GM12878 (cell line): ENCODE measurements at regions of chr18 and their contacts with region 1.

Region 1: DNA sequence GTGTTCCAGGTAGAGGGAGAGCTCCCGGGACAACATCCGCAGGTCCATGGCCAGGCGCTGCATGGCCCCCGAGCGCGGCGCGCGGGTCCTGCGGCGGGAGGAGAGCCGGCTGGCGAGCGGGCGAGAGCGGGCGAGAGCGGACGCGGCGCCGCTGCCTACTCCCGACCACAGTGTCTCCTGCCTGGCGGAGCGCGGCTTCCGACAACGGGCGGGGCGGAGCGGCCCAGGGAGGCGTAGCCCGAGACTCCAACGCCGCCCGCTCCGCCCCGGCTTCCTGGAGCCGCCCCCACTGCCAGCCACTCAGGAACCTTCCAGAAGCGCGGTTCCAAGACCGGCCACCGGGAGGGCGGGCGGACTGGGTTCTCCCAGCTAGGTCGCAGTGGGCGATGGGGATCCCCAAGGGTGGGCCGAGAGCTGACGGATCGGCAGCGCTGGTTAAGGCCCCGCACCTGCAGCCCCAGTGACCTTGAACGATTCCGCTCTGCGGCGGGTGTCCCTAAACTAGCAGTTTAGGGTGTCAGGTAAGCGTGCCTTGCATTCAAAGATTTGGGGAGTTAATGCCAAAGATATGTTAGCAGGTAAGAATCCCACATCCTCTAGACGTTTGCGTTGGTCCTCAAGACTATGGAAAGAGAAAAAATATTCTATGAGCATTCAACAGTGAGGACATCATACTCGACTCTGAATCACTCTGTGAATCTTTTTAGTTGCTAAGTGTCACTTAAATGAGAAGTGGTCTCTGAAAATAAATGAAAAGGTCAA is at the start of gene ABHD3:
- DNase-seq: peak; percentile 55
- ATAC-seq: peak; percentile 97
- H3K4me3 ChIP-seq: peak within 1 kb of the TSS; percentile 76
- H3K27ac ChIP-seq: peak within 1 kb of the TSS; percentile 83
- H3K4me1 ChIP-seq: no peaks in the 10 kb centered on the region
- H3K27me3 ChIP-seq: no peaks in the 10 kb centered on the region
- CTCF ChIP-seq: peak; percentile 27 to 42 (median 35); a peak in 5 of 6 replicates
- EP300 ChIP-seq: no peak
- POLR2A ChIP-seq: peak; percentile 96
- RAD21 ChIP-seq: peak; percentile 23; the same call in 1 of the 2 replicates
- polyA plus RNA-seq, gene ABHD3: 4.9 to 11.9 TPM

Region 2: DNA sequence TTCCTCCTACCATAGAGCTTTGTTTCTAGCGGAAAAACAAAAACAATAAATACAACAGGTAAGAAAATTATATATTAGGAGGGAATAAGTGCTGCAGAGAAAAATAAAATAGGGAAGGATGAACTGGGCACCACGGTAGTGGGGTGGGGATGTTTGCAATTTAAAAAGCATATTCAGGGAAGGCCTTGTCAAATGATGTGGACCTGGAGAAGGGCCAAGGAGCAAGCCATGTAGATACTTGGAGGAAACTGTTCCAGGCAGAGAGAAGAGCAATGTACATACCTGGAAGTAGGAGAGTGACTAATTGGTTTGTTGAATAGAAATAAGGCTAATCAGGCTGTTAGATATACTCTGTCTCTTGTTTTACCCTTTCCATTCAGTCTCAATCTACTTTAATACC is 729.7 kb before region 1 on chr18:
- CTCF ChIA-PET with region 1: no interaction called
- POLR2A ChIA-PET with region 1: no interaction called
- RAD21 ChIA-PET with region 1: no interaction called
- SMC1A ChIA-PET with region 1: no interaction called
- in situ Hi-C with region 1: no loop called
- intact Hi-C with region 1: no loop called
- DNase-seq: no peak
- ATAC-seq: no peak
- H3K4me3 ChIP-seq: no peak overlapping the region
- H3K27ac ChIP-seq: no peak overlapping the region
- H3K4me1 ChIP-seq: no peaks in the 10 kb centered on the region
- H3K27me3 ChIP-seq: no peaks in the 10 kb centered on the region
- CTCF ChIP-seq: no peak
- EP300 ChIP-seq: no peak
- POLR2A ChIP-seq: no peak
- RAD21 ChIP-seq: no peak

Region 3: GRCh38 chr18:21740724-21741510 is 36.1 kb after region 1 on chr18 and contains the start of gene MIB1:
- CTCF ChIA-PET with region 1: no interaction called
- POLR2A ChIA-PET with region 1: interaction called, 7 read pairs
- RAD21 ChIA-PET with region 1: interaction called, 12 read pairs
- SMC1A ChIA-PET with region 1: interaction called, 5 read pairs
- in situ Hi-C with region 1: no loop called
- intact Hi-C with region 1: loop called (anchors 1 kb)
- DNase-seq: peak; percentile 83
- ATAC-seq: peak; percentile 85
- H3K4me3 ChIP-seq: peak within 1 kb of the TSS; percentile 96
- H3K27ac ChIP-seq: peak within 1 kb of the TSS; percentile 91
- H3K4me1 ChIP-seq: no peaks in the 10 kb centered on the region
- H3K27me3 ChIP-seq: no peaks in the 10 kb centered on the region
- CTCF ChIP-seq: no peak
- EP300 ChIP-seq: no peak
- POLR2A ChIP-seq: peak; percentile 64
- RAD21 ChIP-seq: no peak
- polyA plus RNA-seq, gene MIB1: 3.6 to 4.8 TPM

Region 4: GRCh38 chr18:21777814-21778213 is 73.0 kb after region 1 on chr18:
- CTCF ChIA-PET with region 1: no interaction called
- POLR2A ChIA-PET with region 1: no interaction called
- RAD21 ChIA-PET with region 1: no interaction called
- SMC1A ChIA-PET with region 1: no interaction called
- in situ Hi-C with region 1: no loop called
- intact Hi-C with region 1: no loop called
- DNase-seq: peak; percentile 31
- ATAC-seq: peak; percentile 83
- H3K4me3 ChIP-seq: no peak overlapping the region
- H3K27ac ChIP-seq: peak overlapping the region; percentile 61
- H3K4me1 ChIP-seq: peaks cover 20% of the 10 kb centered on the region
- H3K27me3 ChIP-seq: no peaks in the 10 kb centered on the region
- CTCF ChIP-seq: no peak
- EP300 ChIP-seq: no peak
- POLR2A ChIP-seq: no peak
- RAD21 ChIP-seq: no peak

Region 5: DNA sequence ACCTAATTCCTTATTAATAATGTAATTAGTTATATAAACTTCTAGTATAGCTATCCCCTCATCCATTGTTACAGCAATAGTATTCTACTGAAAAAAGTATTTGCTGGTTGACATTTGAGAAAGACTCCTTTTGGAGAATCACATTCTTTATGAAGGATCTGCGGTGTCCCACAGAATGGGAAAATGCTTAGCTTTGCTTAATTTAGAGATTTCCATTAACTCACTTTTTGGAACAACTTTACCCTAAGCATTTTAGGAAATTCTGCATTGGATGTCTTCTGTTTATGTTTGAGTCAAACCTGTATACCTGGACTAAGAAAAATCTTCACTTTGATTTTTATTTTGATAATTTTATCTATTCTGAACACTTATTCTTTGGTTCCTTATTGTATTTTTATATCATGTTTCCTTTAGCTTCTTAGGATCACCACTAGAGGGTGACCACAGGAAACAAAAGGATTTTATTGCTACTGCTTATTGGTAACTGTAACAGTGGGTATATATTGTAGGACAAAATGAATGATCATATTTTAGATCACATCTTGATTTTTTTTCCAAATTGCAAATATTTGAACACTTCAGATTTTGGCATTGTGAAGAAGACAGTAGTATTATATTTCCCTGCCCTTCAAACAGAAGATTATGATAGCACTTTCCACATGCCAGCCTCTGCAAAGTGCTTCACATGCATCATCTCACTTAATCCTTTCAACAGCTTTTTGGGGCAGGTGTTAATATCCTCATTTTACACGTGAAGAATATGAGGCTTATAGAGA is 115.4 kb after region 1 on chr18:
- CTCF ChIA-PET with region 1: no interaction called
- POLR2A ChIA-PET with region 1: no interaction called
- RAD21 ChIA-PET with region 1: no interaction called
- SMC1A ChIA-PET with region 1: no interaction called
- in situ Hi-C with region 1: no loop called
- intact Hi-C with region 1: no loop called
- DNase-seq: no peak
- ATAC-seq: no peak
- H3K4me3 ChIP-seq: no peak overlapping the region
- H3K27ac ChIP-seq: no peak overlapping the region
- H3K4me1 ChIP-seq: no peaks in the 10 kb centered on the region
- H3K27me3 ChIP-seq: no peaks in the 10 kb centered on the region
- CTCF ChIP-seq: peak in 2 of 3 experiments; percentile 44 to 45; a peak in 5 of 6 replicates
- EP300 ChIP-seq: no peak
- POLR2A ChIP-seq: no peak
- RAD21 ChIP-seq: peak; percentile 52